ENCODE measurements at regions of chr12 and their contacts with region 1.

Region 1: GRCh38 chr12:18320036-18320617 is 58.8 kb downstream of the PIK3C2G start:
- DNase-seq: peak; percentile 75 to 81
- H3K4me3 ChIP-seq: no peak overlapping the region
- H3K4me3 Mint-ChIP-seq: peak overlapping the region; percentile 36
- H3K27ac Mint-ChIP-seq: peak overlapping the region; percentile 0
- H3K4me1 ChIP-seq: peaks cover 15% of the 10 kb centered on the region
- H3K4me1 Mint-ChIP-seq: peaks cover 20% of the 10 kb centered on the region
- H3K27me3 ChIP-seq: no peaks in the 10 kb centered on the region; the same call in 1 of the 2 replicates
- H3K27me3 Mint-ChIP-seq: peaks cover under 1% of the 10 kb centered on the region
- CTCF ChIP-seq: peak; percentile 69

Region 2: GRCh38 chr12:17949558-17950141 is 370.5 kb before region 1 on chr12:
- CTCF ChIA-PET with region 1: no interaction called
- POLR2A ChIA-PET with region 1: no interaction called
- intact Hi-C with region 1: no loop called
- DNase-seq: no peak
- H3K4me3 ChIP-seq: no peak overlapping the region
- H3K4me3 Mint-ChIP-seq: no peak overlapping the region
- H3K27ac Mint-ChIP-seq: no peak overlapping the region
- H3K4me1 ChIP-seq: no peaks in the 10 kb centered on the region
- H3K4me1 Mint-ChIP-seq: no peaks in the 10 kb centered on the region
- H3K27me3 ChIP-seq: no peaks in the 10 kb centered on the region
- H3K27me3 Mint-ChIP-seq: no peaks in the 10 kb centered on the region
- CTCF ChIP-seq: no peak

Region 3: DNA sequence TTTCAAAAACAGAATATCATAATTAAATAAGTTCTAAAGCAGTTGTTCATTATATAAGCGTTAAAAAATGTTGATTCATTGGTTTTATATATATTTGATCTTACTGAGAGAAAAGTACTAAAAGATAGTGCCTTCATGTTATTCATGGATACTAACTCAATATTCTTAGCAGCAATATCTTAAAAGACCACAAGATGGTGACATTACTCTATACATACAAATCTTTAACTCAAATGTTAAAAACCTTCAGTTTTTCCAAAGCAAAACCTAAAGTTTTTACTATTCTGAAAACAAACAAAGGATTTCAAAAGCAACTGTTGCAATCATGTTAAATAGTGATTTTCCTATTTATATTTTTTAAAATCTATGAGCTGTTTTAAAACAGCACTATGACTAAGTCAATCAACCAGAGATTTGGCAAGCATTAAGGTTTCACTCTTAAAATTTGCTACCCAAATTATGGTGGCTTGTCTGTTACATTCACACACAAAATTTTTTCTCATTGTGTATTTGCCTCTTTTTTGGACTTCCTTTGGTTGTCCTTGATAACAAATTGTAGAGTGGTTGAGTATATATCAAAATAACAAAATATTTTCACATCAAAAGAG is 180.0 kb before region 1 on chr12:
- CTCF ChIA-PET with region 1: interaction called, 4 read pairs
- POLR2A ChIA-PET with region 1: no interaction called
- intact Hi-C with region 1: loop called (anchors 1 kb)
- DNase-seq: no peak
- H3K4me3 ChIP-seq: no peak overlapping the region
- H3K4me3 Mint-ChIP-seq: no peak overlapping the region
- H3K27ac Mint-ChIP-seq: no peak overlapping the region
- H3K4me1 ChIP-seq: no peaks in the 10 kb centered on the region
- H3K4me1 Mint-ChIP-seq: no peaks in the 10 kb centered on the region
- H3K27me3 ChIP-seq: no peaks in the 10 kb centered on the region
- H3K27me3 Mint-ChIP-seq: peaks cover 3% of the 10 kb centered on the region
- CTCF ChIP-seq: peak; percentile 51 to 77

Region 4: GRCh38 chr12:18250313-18250916 is 69.7 kb before region 1 on chr12:
- CTCF ChIA-PET with region 1: interaction called, 17 read pairs
- POLR2A ChIA-PET with region 1: no interaction called
- intact Hi-C with region 1: loop called (anchors 1 kb)
- DNase-seq: peak in 1 of 2 experiments; percentile 67
- H3K4me3 ChIP-seq: no peak overlapping the region
- H3K4me3 Mint-ChIP-seq: no peak overlapping the region
- H3K27ac Mint-ChIP-seq: no peak overlapping the region
- H3K4me1 ChIP-seq: no peaks in the 10 kb centered on the region
- H3K4me1 Mint-ChIP-seq: no peaks in the 10 kb centered on the region
- H3K27me3 ChIP-seq: no peaks in the 10 kb centered on the region
- H3K27me3 Mint-ChIP-seq: peaks cover 9% of the 10 kb centered on the region
- CTCF ChIP-seq: peak; percentile 80 to 93

Region 5: DNA sequence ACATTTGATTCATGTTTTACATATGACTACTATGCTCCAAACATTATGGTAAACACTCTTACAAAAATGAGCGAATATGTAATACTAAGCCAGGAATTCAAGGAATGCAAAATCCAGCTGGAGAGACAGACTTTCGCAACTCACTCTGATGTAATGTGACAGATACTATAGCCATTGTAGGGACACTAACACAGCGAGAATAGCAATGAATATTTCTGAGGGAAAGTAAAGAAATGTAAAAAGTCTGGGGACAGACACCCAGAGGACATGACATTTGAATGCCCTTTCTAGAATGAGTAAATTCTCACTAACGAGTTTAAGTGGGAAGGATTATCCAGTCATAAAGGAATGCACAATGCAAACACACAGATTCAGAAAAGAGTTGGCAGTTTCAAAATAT is 63.1 kb after region 1 on chr12:
- CTCF ChIA-PET with region 1: no interaction called
- POLR2A ChIA-PET with region 1: no interaction called
- intact Hi-C with region 1: loop called (anchors 2 kb)
- DNase-seq: peak; percentile 49 to 64
- H3K4me3 ChIP-seq: no peak overlapping the region
- H3K4me3 Mint-ChIP-seq: peak overlapping the region; percentile 36
- H3K27ac Mint-ChIP-seq: peak overlapping the region; percentile 78
- H3K4me1 ChIP-seq: peaks cover 17% of the 10 kb centered on the region
- H3K4me1 Mint-ChIP-seq: peaks cover 14% of the 10 kb centered on the region
- H3K27me3 ChIP-seq: no peaks in the 10 kb centered on the region
- H3K27me3 Mint-ChIP-seq: peaks cover 9% of the 10 kb centered on the region
- CTCF ChIP-seq: no peak

Region 6: DNA sequence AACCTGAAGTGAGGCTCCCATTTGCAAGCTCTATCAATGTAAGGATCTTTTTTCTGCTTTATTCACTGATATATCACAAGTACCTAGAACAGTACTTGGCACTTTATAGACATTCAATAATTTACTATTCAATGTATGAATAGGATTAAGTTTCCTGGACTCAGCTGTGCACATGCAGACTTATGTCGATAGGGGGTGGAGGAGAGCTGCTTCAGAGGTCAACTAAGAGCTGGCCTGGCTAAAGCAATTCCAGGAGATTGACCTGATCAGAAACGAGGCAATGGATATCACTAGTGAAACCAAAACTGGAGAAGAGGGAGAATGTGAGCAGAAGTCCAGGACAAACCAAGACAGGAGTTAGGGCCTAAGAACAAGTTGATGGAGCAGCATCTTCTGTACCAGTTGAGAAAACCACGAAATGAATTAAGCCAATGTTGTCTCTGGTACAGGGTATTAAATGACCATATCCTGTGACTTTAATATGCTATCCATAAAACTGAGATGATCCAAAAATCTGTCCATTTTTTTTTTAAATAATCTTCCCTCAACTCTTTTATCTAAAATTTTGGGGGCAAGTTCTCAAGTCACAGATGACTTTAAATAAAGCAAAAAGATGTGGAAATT is 110.4 kb after region 1 on chr12:
- CTCF ChIA-PET with region 1: no interaction called
- POLR2A ChIA-PET with region 1: no interaction called
- intact Hi-C with region 1: no loop called
- DNase-seq: peak; percentile 62 to 78
- H3K4me3 ChIP-seq: no peak overlapping the region
- H3K4me3 Mint-ChIP-seq: no peak overlapping the region
- H3K27ac Mint-ChIP-seq: no peak overlapping the region
- H3K4me1 ChIP-seq: no peaks in the 10 kb centered on the region
- H3K4me1 Mint-ChIP-seq: no peaks in the 10 kb centered on the region
- H3K27me3 ChIP-seq: no peaks in the 10 kb centered on the region
- H3K27me3 Mint-ChIP-seq: no peaks in the 10 kb centered on the region
- CTCF ChIP-seq: peak; percentile 93 to 96

Region 7: DNA sequence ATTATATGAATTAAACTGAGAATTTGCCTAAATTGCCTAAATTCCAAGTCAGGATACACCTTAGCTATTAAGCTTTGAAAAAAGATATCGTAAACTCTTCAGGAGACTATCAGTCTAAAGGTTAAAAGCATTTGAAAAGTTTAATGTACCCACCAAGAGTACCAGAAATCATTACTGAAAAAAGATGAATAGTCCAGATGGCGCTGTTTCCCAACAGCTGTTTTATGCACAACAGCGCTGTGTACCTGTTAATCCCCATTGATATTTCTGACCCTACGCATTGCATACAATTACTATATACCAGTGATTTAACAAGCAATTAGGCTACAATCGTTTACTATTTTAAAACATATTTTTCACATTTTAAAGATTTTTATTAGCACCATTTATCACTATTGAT is 232.7 kb after region 1 on chr12:
- CTCF ChIA-PET with region 1: no interaction called
- POLR2A ChIA-PET with region 1: no interaction called
- intact Hi-C with region 1: loop called (anchors 10 kb)
- DNase-seq: no peak
- H3K4me3 ChIP-seq: no peak overlapping the region
- H3K4me3 Mint-ChIP-seq: no peak overlapping the region
- H3K27ac Mint-ChIP-seq: no peak overlapping the region
- H3K4me1 ChIP-seq: peaks cover 42% of the 10 kb centered on the region
- H3K4me1 Mint-ChIP-seq: peaks cover 17% of the 10 kb centered on the region
- H3K27me3 ChIP-seq: no peaks in the 10 kb centered on the region
- H3K27me3 Mint-ChIP-seq: peaks cover 10% of the 10 kb centered on the region
- CTCF ChIP-seq: peak in 1 of 2 experiments; percentile 27

Region 8: DNA sequence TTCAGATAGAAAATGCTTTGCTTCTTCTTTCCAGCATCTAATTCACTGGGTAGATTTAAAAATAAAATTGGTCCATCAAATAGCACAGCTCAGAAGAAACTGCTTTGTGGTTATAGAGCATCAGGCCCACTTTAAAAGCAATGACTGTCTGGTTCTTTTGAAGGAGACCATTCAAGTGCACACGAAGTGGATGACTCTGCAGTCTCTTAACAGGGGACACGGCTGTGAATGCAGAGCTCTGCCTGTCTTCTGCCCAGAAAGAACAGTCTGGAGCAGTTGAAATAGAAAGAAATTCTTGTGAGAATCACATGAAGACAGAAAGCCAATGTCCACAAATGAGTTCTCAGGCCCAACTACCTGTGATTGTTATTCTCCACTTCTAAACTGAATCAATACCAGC is 670.7 kb after region 1 on chr12:
- CTCF ChIA-PET with region 1: no interaction called
- POLR2A ChIA-PET with region 1: no interaction called
- intact Hi-C with region 1: no loop called
- DNase-seq: no peak
- H3K4me3 ChIP-seq: no peak overlapping the region
- H3K4me3 Mint-ChIP-seq: no peak overlapping the region
- H3K27ac Mint-ChIP-seq: no peak overlapping the region
- H3K4me1 ChIP-seq: no peaks in the 10 kb centered on the region
- H3K4me1 Mint-ChIP-seq: peaks cover 4% of the 10 kb centered on the region
- H3K27me3 ChIP-seq: no peaks in the 10 kb centered on the region
- H3K27me3 Mint-ChIP-seq: no peaks in the 10 kb centered on the region
- CTCF ChIP-seq: no peak

Measured in Caco-2 (cell line).